ENCODE measurements at regions of chr10 and their contacts with region 1.

Region 1: DNA sequence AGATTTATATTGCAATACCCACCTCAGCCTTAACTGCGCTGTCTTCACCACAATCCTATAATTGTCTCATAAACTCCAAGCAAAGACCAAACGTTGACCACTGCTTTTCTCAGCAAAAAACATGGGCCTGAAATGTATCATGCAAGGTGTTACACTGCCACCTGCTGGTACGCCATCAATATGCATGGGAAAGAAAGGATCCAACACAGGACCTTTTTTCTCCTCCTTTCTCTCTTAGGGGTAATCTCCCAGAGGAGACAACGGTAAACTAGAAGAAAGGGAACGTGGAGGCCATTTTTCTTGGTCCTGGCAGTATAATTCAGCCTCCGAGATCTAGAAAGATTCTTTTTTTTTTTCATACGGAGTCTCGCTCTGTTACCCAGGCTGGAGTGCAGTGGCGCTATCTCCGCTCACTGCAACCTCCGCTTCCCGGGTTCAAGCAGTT is 79.1 kb upstream of the MPP7 start:
- DNase-seq: peak; percentile 76

Region 2: GRCh38 chr10:28190196-28190595 is 191.7 kb before region 1 on chr10:
- in situ Hi-C with region 1: no loop called
- DNase-seq: no peak

Region 3: GRCh38 chr10:28250782-28251181 is 131.1 kb before region 1 on chr10:
- in situ Hi-C with region 1: loop called (anchors 25 kb)
- DNase-seq: peak; percentile 30